Right cardiac atrium (tissue), 5 donors: ENCODE measurements at regions of chr16 and their contacts with region 1.

Region 1: DNA sequence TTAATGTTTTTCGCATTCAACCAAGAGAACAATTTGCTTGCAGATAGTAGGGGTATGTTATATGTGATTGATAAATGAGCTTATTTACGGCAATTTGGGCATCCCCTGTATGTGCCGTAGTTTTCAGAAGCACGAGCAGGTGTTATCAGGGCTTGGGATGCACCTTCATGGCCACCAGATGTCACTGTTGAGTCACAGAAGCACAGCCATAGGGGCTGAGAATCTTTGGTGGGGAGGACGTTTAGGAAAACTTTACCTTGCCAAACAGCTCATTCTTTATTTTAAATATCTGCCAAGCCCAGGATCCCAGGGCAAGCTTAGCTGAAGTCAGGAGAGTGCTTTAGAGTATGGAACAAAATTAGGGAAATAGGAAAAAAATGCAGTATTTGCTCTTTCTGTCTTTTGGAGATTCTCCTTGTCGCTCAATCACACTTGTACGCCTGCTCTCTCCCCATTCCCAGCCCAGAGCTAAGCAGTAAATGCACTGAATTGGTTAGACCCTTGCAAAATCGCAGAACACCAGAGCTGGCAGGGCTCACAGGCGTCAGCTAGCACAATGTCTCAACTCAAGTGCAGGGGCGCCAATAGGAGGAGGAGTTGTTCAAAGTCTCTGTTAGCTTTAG is 93.6 kb upstream of the MPHOSPH6 start:
- DNase-seq: peak in 2 of 3 donors; percentile 32 to 56
- ATAC-seq: peak; percentile 83 to 91
- H3K4me3 ChIP-seq: no peak overlapping the region
- H3K27ac ChIP-seq: no peak overlapping the region
- H3K4me1 ChIP-seq: no peaks in the 10 kb centered on the region
- H3K27me3 ChIP-seq: no peaks in the 10 kb centered on the region

Region 2: DNA sequence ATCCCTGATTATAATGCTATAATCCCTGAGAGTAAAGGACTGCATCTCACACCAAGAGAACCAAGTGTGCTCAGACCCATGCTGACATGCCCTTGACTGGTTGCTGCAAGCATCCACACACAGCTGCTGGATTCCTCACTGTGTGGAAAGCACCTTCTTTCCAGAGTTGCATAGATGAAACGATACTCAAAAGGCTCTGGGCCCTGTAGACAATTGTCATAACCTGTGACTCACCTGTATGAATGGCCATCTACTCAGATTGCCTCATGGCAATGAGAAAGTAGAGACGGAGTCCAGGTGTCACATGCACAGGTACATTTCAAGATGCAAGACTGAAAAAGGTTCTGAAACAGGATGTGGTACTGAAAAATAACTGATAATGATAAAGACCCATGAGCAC is 151.7 kb before region 1 on chr16:
- intact Hi-C with region 1: no loop called
- DNase-seq: no peak
- ATAC-seq: no peak
- H3K4me3 ChIP-seq: no peak overlapping the region
- H3K27ac ChIP-seq: no peak overlapping the region
- H3K4me1 ChIP-seq: no peaks in the 10 kb centered on the region
- H3K27me3 ChIP-seq: no peaks in the 10 kb centered on the region

Region 3: GRCh38 chr16:82337355-82337754 is 73.7 kb after region 1 on chr16:
- intact Hi-C with region 1: loop called in 3 of 4 experiments (anchors 2 to 5 kb)
- DNase-seq: no peak
- ATAC-seq: no peak
- H3K4me3 ChIP-seq: no peak overlapping the region
- H3K27ac ChIP-seq: no peak overlapping the region
- H3K4me1 ChIP-seq: no peaks in the 10 kb centered on the region
- H3K27me3 ChIP-seq: no peaks in the 10 kb centered on the region

Region 4: DNA sequence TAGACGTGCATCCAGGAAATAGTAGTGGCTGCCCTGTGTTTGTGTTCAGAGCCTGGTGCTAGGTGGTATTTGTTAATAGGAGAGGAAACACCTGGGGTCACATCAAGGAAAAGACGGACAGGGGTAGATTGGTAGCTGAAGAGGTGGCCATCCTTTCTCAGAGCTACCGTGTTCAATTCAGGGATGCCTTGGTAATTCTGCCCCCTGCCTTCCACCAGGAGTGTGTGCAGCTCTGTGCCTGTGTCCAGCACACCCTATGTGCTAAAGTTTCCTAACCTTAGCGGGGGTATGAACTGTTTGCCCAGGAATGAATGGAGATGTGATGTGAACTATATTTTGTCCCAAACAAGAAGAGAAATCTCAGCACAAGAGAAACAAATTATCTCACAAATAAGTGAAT is 80.5 kb after region 1 on chr16:
- intact Hi-C with region 1: loop called (anchors 2 to 5 kb)
- DNase-seq: no peak
- ATAC-seq: peak; percentile 69 to 77
- H3K4me3 ChIP-seq: no peak overlapping the region
- H3K27ac ChIP-seq: no peak overlapping the region
- H3K4me1 ChIP-seq: no peaks in the 10 kb centered on the region
- H3K27me3 ChIP-seq: no peaks in the 10 kb centered on the region

Region 5: DNA sequence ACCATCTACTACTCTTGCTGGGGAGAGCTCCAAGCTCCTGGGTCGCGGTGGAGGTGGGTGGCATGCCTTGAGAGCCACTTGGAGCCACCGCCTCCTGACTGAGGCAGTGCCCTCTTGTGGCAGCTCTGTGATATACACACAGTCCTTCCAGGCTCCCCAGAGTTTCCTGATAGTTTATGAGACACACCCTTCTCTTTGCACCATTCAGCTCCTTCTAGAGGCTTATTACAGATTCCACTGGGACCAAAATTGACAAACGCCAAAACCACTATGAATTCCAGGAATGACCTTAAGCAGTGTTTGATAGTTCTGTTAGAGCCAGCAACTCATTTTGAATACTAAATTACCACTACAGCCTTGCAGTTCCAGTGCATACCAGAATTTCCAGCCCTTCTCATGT is 193.1 kb after region 1 on chr16:
- intact Hi-C with region 1: loop called in 1 of 4 experiments (anchors 5 kb)
- DNase-seq: peak; percentile 40 to 69 (median 54)
- ATAC-seq: peak; percentile 81
- H3K4me3 ChIP-seq: no peak overlapping the region
- H3K27ac ChIP-seq: no peak overlapping the region
- H3K4me1 ChIP-seq: no peaks in the 10 kb centered on the region
- H3K27me3 ChIP-seq: no peaks in the 10 kb centered on the region

Region 6: DNA sequence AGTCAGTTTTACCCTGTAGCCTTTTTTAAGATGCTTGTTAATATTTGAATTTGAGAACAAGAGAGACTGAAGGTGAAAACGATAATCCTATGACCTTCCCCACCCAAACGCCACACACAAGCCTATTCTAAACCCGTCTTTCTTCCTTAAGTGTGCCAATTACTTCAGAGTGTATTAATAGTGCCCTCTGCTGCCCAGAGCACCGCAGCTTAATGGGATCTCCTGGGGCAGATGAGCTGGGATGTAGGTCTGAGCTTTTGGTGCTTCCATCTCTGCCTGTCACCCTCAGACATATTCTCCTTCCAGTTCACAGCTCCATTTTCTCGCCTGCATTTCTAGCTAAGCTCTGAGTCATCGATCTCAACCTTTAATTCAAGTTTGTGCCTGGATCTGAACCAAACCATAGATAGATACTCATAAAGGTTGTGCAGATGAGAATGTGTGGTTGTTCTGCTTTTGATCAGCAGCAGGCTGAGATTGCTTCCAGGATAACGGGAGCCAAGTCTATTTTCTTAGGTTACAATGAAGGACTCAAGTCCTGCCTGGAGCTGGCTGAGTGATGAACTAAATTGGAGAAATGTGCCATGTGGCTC is 316.8 kb after region 1 on chr16:
- intact Hi-C with region 1: loop called in 1 of 4 experiments (anchors 5 kb)
- DNase-seq: peak in 1 of 3 donors; percentile 53
- ATAC-seq: peak; percentile 58 to 65
- H3K4me3 ChIP-seq: no peak overlapping the region
- H3K27ac ChIP-seq: no peak overlapping the region
- H3K4me1 ChIP-seq: no peaks in the 10 kb centered on the region
- H3K27me3 ChIP-seq: no peaks in the 10 kb centered on the region